ENCODE measurements at regions of chr4 and their contacts with region 1.

Region 1: DNA sequence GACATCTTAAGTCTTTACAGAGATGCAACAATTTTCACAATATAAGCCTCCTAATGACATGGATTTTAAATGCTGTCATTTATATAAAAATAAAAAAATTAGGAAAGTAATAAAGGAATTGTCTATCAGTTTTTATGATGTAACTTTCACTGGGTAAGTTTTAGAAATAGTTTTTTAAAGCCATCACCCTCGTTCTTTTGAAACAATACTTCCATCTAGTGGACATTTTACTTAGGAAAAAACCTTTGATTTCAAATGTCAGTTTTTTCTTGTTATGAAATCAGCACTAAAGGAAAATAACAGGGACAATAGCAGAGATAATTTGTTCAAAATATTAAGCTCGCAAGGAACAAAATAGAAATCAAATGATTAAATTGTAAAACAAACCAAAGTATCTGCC is 24.3 kb upstream of the NDNF start:
- DNase-seq: peak; percentile 24
- ATAC-seq: no peak
- H3K4me3 ChIP-seq: no peak overlapping the region
- H3K27ac ChIP-seq: no peak overlapping the region
- H3K4me1 ChIP-seq: no peaks in the 10 kb centered on the region
- H3K27me3 ChIP-seq: no peaks in the 10 kb centered on the region
- CTCF ChIP-seq: peak; percentile 21 to 59 (median 57); a peak in 4 of 6 replicates
- POLR2A ChIP-seq: no peak
- RAD21 ChIP-seq: peak; percentile 80

Region 2: GRCh38 chr4:120071192-120071795 is 1025.3 kb before region 1 on chr4:
- CTCF ChIA-PET with region 1: no interaction called
- POLR2A ChIA-PET with region 1: no interaction called
- RAD21 ChIA-PET with region 1: no interaction called
- intact Hi-C with region 1: loop called (anchors 2 kb)
- DNase-seq: peak; percentile 57
- ATAC-seq: no peak
- H3K4me3 ChIP-seq: no peak overlapping the region
- H3K27ac ChIP-seq: no peak overlapping the region
- H3K4me1 ChIP-seq: peaks cover 2 to 8% of the 10 kb centered on the region in 2 experiments; a peak in 2 of 4 replicates
- H3K27me3 ChIP-seq: no peaks in the 10 kb centered on the region
- CTCF ChIP-seq: peak; percentile 38 to 70 (median 48); a peak in 4 of 6 replicates
- POLR2A ChIP-seq: no peak
- RAD21 ChIP-seq: peak; percentile 79

Region 3: DNA sequence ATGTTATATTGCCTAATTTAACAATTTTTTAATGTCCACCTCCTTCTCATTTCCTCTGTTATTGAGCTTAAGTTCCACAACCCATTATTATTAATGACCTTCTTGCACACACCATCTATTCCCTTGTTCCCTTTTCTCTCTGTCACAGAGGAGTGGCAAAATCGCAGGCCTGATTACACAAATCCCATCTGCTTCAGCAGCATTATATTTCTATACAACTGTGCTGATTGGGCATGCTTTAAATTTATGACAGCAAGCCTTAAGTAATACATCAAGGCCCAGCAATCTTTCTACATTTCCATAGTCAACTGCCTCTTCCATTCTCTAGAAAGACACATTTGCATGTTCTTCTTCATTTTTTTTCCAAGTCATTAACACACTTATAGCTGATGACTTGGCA is 598.0 kb before region 1 on chr4:
- CTCF ChIA-PET with region 1: no interaction called
- POLR2A ChIA-PET with region 1: no interaction called
- RAD21 ChIA-PET with region 1: no interaction called
- intact Hi-C with region 1: no loop called
- DNase-seq: no peak
- ATAC-seq: no peak
- H3K4me3 ChIP-seq: no peak overlapping the region
- H3K27ac ChIP-seq: no peak overlapping the region
- H3K4me1 ChIP-seq: no peaks in the 10 kb centered on the region
- H3K27me3 ChIP-seq: no peaks in the 10 kb centered on the region
- CTCF ChIP-seq: no peak
- POLR2A ChIP-seq: no peak
- RAD21 ChIP-seq: no peak